HCT116 (cell line): ENCODE measurements at regions of chr7 and their contacts with region 1.

Region 1: DNA sequence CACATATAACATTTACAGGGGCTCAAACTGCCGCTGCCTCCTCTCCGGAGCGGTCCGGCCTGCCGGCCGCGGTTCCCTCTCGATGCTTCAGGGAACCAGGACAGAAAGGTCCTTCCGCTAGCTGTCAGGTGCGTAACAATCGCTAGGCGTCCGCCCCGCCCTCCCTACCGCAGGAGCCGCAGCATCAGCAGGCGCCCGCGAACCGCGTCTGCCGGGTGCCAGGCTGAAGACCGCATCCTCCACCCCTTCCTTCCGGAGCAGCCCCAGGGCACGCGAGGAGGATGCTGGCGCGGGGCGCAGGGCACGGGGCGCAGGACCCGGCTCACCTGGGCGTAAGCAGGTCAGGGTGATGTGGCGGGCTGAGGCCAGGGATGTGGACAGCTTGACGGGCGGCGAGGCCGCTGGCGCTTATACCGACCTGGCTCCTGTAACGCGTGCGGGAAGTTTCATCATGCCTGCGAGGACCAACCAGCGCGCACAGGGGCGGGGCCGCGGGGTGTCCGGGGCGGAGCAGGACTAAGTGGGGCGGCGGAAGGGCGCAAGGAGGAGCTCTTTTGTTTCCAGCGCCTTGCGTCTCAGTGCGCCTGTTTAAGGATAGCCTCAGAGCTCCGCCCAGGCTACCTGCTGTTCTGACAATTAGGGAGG is at the start of gene ASNS:
- DNase-seq: peak; percentile 90
- ATAC-seq: peak; percentile 97
- H3K4me3 ChIP-seq: peak within 1 kb of the TSS; percentile 87 to 89
- H3K27ac ChIP-seq: peak within 1 kb of the TSS; percentile 76
- H3K4me1 ChIP-seq: peaks cover 6 to 9% of the 10 kb centered on the region in 2 experiments; a peak in 3 of 4 replicates
- H3K27me3 ChIP-seq: no peaks in the 10 kb centered on the region
- CTCF ChIP-seq: no peak
- POLR2A ChIP-seq: peak; percentile 83
- RAD21 ChIP-seq: no peak
- total RNA-seq, gene ASNS: 282 TPM

Region 2: DNA sequence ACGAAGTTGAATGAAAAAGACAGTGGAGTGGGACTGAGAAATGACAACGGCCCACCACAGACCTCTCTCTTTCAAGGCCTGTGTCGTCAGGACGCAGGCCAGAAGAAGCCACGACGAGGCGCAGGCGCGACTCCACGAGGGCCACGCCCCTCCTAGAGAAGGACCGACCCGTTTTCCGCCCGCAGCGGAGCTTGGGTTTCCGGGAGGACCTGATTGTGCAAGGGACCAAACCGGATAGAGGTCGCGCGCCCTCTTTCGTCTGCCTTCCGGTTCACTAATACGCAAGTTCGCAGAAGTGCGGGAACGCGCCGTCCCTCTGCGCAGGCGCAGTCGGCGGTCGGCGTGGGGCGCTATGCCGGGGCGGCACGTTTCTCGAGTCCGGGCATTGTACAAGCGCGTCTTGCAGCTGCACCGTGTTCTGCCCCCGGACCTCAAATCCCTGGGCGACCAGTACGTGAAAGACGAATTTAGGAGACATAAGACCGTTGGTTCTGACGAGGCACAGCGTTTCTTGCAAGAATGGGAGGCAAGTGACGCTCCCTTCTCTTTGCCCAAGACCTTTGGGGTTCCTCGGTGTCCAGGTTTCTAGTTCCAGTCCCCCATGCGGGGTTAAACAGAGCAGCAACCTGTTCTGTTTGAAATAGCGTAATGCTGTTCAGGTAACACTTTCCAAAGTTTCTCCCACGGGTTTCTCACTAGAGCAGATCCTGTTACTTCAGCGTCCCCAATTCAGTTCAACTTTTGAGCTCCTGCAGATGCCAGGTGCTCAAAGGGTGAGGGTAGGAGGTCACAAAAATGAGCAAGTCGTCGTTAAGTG is 754.6 kb before region 1 on chr7 and contains the start of gene SDHAF3:
- CTCF ChIA-PET with region 1: no interaction called
- POLR2A ChIA-PET with region 1: interaction called, 3 read pairs
- RAD21 ChIA-PET with region 1: no interaction called
- intact Hi-C with region 1: loop called (anchors 1 kb)
- DNase-seq: peak; percentile 96
- ATAC-seq: peak; percentile 94
- H3K4me3 ChIP-seq: peak within 1 kb of the TSS; percentile 83 to 85
- H3K27ac ChIP-seq: peak within 1 kb of the TSS; percentile 56
- H3K4me1 ChIP-seq: peaks cover 2 to 15% of the 10 kb centered on the region in 2 experiments; a peak in 3 of 4 replicates
- H3K27me3 ChIP-seq: no peaks in the 10 kb centered on the region
- CTCF ChIP-seq: no peak
- POLR2A ChIP-seq: peak; percentile 80
- RAD21 ChIP-seq: no peak
- total RNA-seq, gene SDHAF3: 25.0 TPM

Region 3: GRCh38 chr7:97971990-97972943 is 100.1 kb after region 1 on chr7:
- CTCF ChIA-PET with region 1: no interaction called
- POLR2A ChIA-PET with region 1: interaction called, 8 read pairs
- RAD21 ChIA-PET with region 1: no interaction called
- intact Hi-C with region 1: loop called (anchors 2 kb)
- DNase-seq: peak; percentile 63
- ATAC-seq: peak; percentile 85
- H3K4me3 ChIP-seq: peak overlapping the region; percentile 93 to 95
- H3K27ac ChIP-seq: peak overlapping the region; percentile 65
- H3K4me1 ChIP-seq: peaks cover 2 to 10% of the 10 kb centered on the region in 2 experiments; a peak in 2 of 4 replicates
- H3K27me3 ChIP-seq: no peaks in the 10 kb centered on the region
- CTCF ChIP-seq: peak in 2 of 3 experiments; percentile 31 to 47; a peak in 3 of 6 replicates
- POLR2A ChIP-seq: peak; percentile 75
- RAD21 ChIP-seq: no peak

Region 4: DNA sequence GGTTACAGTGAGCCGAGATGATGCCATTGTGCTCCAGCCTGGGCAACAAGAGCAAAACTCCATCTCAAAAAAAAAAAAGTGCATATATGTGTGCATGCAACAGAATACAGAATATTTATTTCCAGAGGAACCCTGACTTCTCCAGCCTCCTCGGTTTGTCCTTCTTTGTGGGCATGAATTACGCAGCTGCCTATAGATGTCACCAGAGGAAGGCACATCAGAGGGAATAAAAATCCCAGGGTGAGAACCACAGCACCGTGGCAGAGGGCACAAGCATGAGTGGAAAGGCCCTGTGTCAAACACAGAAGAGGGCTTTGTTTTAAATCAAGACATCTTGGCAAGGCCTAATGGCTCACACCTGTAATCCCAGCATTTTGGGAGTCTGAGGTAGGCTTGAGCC is 142.2 kb after region 1 on chr7:
- CTCF ChIA-PET with region 1: interaction called, 10 read pairs
- POLR2A ChIA-PET with region 1: interaction called, 6 read pairs
- RAD21 ChIA-PET with region 1: no interaction called
- intact Hi-C with region 1: loop called (anchors 1 kb)
- DNase-seq: no peak
- ATAC-seq: no peak
- H3K4me3 ChIP-seq: no peak overlapping the region
- H3K27ac ChIP-seq: no peak overlapping the region
- H3K4me1 ChIP-seq: 0 out of 4 replicates have a peak, but pooled peaks cover 0 to 3% of the 10 kb centered on the region in 2 experiments
- H3K27me3 ChIP-seq: no peaks in the 10 kb centered on the region
- CTCF ChIP-seq: no peak
- POLR2A ChIP-seq: no peak
- RAD21 ChIP-seq: peak; percentile 16; the same call in 1 of the 2 replicates

Region 5: GRCh38 chr7:98168181-98168905 is 296.2 kb after region 1 on chr7:
- CTCF ChIA-PET with region 1: interaction called, 4 read pairs
- POLR2A ChIA-PET with region 1: interaction called, 3 read pairs
- RAD21 ChIA-PET with region 1: no interaction called
- intact Hi-C with region 1: loop called (anchors 5 kb)
- DNase-seq: peak; percentile 67
- ATAC-seq: peak; percentile 72
- H3K4me3 ChIP-seq: no peak overlapping the region
- H3K27ac ChIP-seq: no peak overlapping the region
- H3K4me1 ChIP-seq: peaks cover 0 to 2% of the 10 kb centered on the region in 2 experiments; a peak in 1 of 4 replicates
- H3K27me3 ChIP-seq: no peaks in the 10 kb centered on the region
- CTCF ChIP-seq: peak; percentile 80 to 85 (median 84)
- POLR2A ChIP-seq: no peak
- RAD21 ChIP-seq: peak; percentile 89

Region 6: GRCh38 chr7:98387136-98387535 is 515.0 kb after region 1 on chr7:
- CTCF ChIA-PET with region 1: no interaction called
- POLR2A ChIA-PET with region 1: no interaction called
- RAD21 ChIA-PET with region 1: no interaction called
- intact Hi-C with region 1: no loop called
- DNase-seq: no peak
- ATAC-seq: no peak
- H3K4me3 ChIP-seq: no peak overlapping the region
- H3K27ac ChIP-seq: no peak overlapping the region
- H3K4me1 ChIP-seq: no peaks in the 10 kb centered on the region; a peak in 1 of 4 replicates
- H3K27me3 ChIP-seq: no peaks in the 10 kb centered on the region
- CTCF ChIP-seq: no peak
- POLR2A ChIP-seq: no peak
- RAD21 ChIP-seq: no peak